Panc1 (cell line): ENCODE measurements at regions of chr3 and their contacts with region 1.

Region 1: GRCh38 chr3:158085358-158085757 is 20.9 kb downstream of the SHOX2 start:
- DNase-seq: no peak
- ATAC-seq: no peak
- H3K4me3 ChIP-seq: no peak overlapping the region
- H3K27ac ChIP-seq: no peak overlapping the region
- H3K4me1 ChIP-seq: no peaks in the 10 kb centered on the region
- H3K27me3 ChIP-seq: peaks cover 16% of the 10 kb centered on the region
- CTCF ChIP-seq: no peak

Region 2: GRCh38 chr3:158522221-158523136 is 437.1 kb after region 1 on chr3:
- CTCF ChIA-PET with region 1: no interaction called
- POLR2A ChIA-PET with region 1: no interaction called
- in situ Hi-C with region 1: no loop called
- intact Hi-C with region 1: loop called (anchors 10 kb)
- DNase-seq: no peak
- ATAC-seq: no peak
- H3K4me3 ChIP-seq: no peak overlapping the region
- H3K27ac ChIP-seq: no peak overlapping the region
- H3K4me1 ChIP-seq: no peaks in the 10 kb centered on the region
- H3K27me3 ChIP-seq: no peaks in the 10 kb centered on the region
- CTCF ChIP-seq: no peak